Testis (tissue), 5 donors: ENCODE measurements at regions of chr1 and their contacts with region 1.

Region 1: GRCh38 chr1:9371391-9371935 is 78.8 kb downstream of the SPSB1 start:
- DNase-seq: peak; percentile 81
- H3K4me3 ChIP-seq: no peak overlapping the region
- H3K27ac ChIP-seq: peak overlapping the region; percentile 1 to 57
- H3K4me1 ChIP-seq: peaks cover 20% of the 10 kb centered on the region
- H3K27me3 ChIP-seq: no peaks in the 10 kb centered on the region
- CTCF ChIP-seq: no peak
- POLR2A ChIP-seq: no peak

Region 2: DNA sequence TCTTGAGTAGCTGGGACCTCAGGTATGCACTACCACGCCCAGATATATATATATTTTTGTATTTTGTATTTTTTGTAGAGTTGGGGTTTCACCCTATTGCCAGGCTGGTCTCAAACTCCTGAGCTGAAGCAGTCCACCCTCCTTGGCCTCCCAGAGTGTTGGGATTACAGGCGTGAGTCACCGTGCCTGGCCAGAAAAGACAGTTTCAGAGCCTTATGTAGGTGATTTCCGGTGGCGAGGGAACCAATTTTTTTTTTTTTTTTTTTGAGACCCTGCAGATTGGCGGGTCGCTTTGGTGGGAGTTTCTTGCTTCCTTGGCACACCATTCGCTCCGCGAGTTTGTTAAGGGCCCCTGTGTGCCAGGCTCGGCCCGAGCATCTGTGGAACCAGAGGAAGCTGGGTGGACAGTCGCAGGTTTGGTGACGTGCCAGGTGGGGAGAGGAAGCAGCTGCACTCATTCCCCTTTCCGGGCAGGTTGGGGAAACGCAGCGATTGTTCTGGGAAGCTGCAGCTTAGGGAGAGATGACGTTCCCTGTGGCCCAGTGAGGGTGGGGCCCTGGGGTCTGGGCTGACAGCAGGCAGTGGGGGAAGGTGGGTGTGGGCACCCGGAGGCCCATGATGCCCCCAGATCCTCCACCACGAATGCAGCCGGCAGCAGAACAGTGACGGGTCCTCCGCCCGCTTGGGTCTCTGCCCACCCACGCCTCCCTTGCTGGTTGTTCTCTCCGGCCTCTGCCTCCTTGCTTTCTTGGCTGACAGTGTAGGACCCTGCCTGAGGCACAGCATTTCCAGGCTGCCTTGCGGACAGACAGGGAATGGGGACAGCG is 53.7 kb before region 1 on chr1:
- intact Hi-C with region 1: loop called (anchors 10 kb)
- DNase-seq: peak; percentile 63
- H3K4me3 ChIP-seq: no peak overlapping the region
- H3K27ac ChIP-seq: peak overlapping the region in 1 of 2 donors; percentile 36
- H3K4me1 ChIP-seq: peaks cover 36% of the 10 kb centered on the region
- H3K27me3 ChIP-seq: no peaks in the 10 kb centered on the region
- CTCF ChIP-seq: no peak
- POLR2A ChIP-seq: no peak

Region 3: DNA sequence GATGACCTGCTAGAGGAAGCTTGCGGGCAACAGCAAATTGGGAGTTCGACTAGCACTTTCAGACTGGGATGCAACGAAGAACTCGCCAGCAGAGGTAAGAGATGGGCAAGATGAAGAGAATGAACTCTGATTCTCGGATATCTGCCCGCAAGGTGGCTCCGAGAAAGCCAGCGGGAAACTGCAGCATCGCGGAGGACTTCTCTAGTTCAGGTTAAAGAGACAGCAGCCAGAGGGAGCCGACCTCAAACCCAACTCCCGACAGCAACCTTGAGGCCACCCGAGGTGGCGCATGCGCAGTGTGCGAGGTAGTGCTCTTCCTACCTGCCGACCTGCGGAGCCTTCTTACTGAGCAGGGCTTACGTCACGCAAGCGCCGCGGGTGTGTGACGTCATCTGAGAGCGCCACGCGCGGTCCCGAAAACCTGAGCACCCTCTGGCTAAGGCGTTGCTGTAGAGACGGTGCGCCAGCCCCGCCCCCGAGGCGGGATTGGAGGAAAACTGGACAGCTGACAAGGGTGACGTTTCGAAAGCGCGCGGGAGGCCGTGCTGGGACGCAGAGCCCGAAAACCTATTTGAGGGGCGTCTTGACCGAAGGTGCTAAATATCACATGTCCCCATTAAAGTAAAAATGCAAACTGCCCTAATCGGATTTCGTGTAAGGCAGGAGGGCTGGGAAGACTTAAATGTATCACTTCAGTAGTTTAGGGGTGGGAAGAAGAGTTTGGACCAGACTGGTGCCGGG is 57.3 kb after region 1 on chr1:
- intact Hi-C with region 1: loop called (anchors 10 kb)
- DNase-seq: peak; percentile 100
- H3K4me3 ChIP-seq: peak overlapping the region; percentile 58 to 63
- H3K27ac ChIP-seq: peak overlapping the region; percentile 69 to 87
- H3K4me1 ChIP-seq: peaks cover 14% of the 10 kb centered on the region
- H3K27me3 ChIP-seq: no peaks in the 10 kb centered on the region
- CTCF ChIP-seq: peak in 2 of 3 experiments; percentile 12 to 32
- POLR2A ChIP-seq: no peak

Region 4: DNA sequence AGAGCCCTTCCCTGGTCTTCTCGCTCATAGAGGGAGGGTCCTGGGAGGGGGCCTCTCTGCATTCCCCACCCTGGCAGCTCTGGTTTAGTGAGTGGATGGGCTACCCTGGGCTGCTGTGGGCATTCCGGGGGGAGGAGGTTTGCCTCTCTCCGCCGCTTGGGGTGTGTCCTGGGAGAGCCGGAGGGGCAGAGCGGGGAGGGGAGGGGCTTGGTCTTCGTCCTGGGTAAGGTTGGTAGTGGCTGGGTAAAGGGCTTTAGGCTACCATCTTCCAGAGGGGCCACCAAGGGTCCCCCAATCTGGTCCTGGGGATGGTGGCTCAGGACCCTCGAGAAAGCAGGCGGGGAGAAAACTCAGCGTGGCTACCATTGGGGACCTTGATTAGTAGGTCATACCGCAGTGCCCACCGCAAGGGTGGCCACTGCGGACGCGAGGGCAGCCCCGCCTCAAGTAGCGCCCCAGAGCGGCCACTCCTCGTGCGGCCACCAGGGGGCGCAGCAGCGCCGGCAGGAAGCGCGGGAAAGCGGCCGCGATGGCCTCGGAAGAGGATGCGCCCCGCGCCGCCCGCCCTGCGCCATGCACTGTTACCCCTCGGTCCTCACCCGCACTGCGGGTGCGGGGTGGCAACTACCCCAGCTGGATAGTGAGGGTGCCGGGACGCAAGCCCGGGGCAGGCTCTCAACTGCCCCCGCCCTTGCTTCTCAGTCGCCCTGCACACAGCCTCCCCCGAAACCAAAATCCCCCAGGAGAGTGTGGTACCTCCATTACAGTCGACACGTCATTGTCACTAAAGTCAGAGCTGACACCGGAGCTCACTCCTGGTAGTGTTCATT is 123.7 kb after region 1 on chr1:
- intact Hi-C with region 1: no loop called
- DNase-seq: peak; percentile 65
- H3K4me3 ChIP-seq: peak overlapping the region; percentile 39 to 49
- H3K27ac ChIP-seq: no peak overlapping the region
- H3K4me1 ChIP-seq: peaks cover 11% of the 10 kb centered on the region
- H3K27me3 ChIP-seq: no peaks in the 10 kb centered on the region
- CTCF ChIP-seq: peak; percentile 97 to 100 (median 97)
- POLR2A ChIP-seq: no peak